Upper lobe of right lung (tissue), 1 donor: ENCODE measurements at regions of chr13 and their contacts with region 1.

Region 1: GRCh38 chr13:104553186-104553585 is 1487.0 kb upstream of the SLC10A2 start:
- DNase-seq: no peak
- ATAC-seq: no peak
- H3K4me3 ChIP-seq: no peak overlapping the region
- H3K27ac ChIP-seq: no peak overlapping the region
- H3K4me1 ChIP-seq: no peaks in the 10 kb centered on the region
- H3K27me3 ChIP-seq: no peaks in the 10 kb centered on the region
- CTCF ChIP-seq: no peak

Region 2: GRCh38 chr13:103908911-103909310 is 644.3 kb before region 1 on chr13:
- intact Hi-C with region 1: loop called (anchors 10 kb)
- DNase-seq: no peak
- ATAC-seq: no peak
- H3K4me3 ChIP-seq: no peak overlapping the region
- H3K27ac ChIP-seq: no peak overlapping the region
- H3K4me1 ChIP-seq: no peaks in the 10 kb centered on the region
- H3K27me3 ChIP-seq: no peaks in the 10 kb centered on the region
- CTCF ChIP-seq: no peak